Activated naive CD4-positive, alpha-beta T cell treated with anti-CD3 and anti-CD28 coated beads for 36 hours (primary cell): ENCODE measurements at regions of chr6 and their contacts with region 1.

Region 1: DNA sequence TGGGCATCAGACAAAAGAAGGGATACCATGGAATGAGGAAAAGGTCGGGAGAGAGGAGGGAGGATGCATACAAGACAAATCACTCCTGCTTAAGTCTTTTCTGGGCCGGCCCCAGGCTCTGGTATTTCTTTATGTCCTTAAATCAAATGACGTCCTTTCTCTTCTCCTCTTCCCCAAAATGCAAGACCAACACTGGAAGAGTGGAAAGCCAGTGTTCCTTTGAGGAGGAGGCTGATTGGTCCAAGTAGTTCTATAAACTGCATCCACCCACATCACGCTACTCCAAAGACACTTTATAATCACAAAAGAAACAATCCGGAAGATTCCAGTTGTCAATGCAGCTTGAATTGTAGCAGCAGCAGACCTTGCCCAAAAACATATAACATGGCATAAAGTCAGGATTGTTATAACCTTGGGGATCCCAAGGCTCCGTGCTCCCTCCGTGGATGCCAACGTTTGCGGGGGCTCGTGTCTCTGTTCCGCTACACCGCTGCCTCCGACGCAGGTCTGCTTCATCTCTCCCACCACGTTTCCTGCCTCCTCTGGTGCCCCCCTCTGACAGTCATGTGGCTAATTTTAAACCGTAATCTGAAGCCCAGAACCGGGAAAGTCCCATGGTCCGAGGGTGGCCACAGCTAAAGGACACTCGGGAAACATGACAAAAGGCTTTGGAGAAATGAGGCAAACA is 47.1 kb downstream of the MCUR1 start:
- DNase-seq: peak; percentile 71
- H3K4me3 Mint-ChIP-seq: peak overlapping the region; percentile 78
- H3K27ac Mint-ChIP-seq: no peak overlapping the region
- H3K4me1 Mint-ChIP-seq: peaks cover 43% of the 10 kb centered on the region
- H3K27me3 Mint-ChIP-seq: peaks cover 1% of the 10 kb centered on the region

Region 2: GRCh38 chr6:13178107-13178506 is 589.2 kb before region 1 on chr6:
- CTCF ChIA-PET with region 1: no interaction called
- intact Hi-C with region 1: no loop called
- DNase-seq: no peak
- H3K4me3 Mint-ChIP-seq: no peak overlapping the region
- H3K27ac Mint-ChIP-seq: no peak overlapping the region
- H3K4me1 Mint-ChIP-seq: peaks cover 3% of the 10 kb centered on the region
- H3K27me3 Mint-ChIP-seq: peaks cover 7% of the 10 kb centered on the region

Region 3: GRCh38 chr6:13725570-13725969 is 41.7 kb before region 1 on chr6:
- CTCF ChIA-PET with region 1: interaction called, 5 read pairs
- intact Hi-C with region 1: loop called (anchors 1 kb)
- DNase-seq: peak; percentile 62
- H3K4me3 Mint-ChIP-seq: no peak overlapping the region
- H3K27ac Mint-ChIP-seq: peak overlapping the region; percentile 80
- H3K4me1 Mint-ChIP-seq: peaks cover 38% of the 10 kb centered on the region
- H3K27me3 Mint-ChIP-seq: no peaks in the 10 kb centered on the region

Region 4: DNA sequence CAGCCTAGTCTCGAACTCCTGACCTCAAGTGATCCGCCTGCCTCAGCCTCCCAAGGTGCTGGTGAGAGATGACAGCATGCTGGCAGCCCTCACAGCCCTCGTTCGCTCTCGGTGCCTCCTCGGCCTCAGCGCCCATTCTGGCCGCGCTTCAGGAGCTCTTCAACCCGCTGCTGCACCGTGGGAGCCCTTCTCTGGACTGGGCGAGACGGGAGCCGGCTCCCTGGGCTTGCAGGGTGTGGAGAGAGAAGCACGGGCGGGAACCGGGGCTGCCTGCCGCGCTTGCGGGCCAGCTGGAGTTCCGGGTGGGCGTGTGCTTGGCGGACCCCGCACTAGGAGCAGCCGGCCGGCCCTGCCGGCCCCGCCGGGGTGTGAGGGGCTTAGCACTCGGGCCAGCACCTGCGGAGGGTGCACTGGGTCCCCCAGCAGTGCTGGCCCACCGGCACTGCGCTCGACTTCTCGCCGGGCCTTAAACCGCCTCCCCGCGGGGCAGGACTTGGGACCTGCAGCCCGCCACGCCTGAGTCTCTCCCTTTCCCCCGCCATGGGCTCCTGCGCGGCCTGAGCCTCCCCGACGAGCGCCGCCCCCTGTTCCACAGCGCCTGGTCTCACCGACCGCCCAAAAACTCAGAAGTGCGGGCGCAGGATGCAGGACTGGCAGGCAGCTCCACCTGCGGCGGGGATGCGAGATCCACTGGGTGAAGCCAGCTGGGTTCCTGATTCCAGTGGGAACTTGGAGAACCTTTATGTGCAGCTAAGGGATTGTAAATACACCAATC is 24.1 kb before region 1 on chr6:
- CTCF ChIA-PET with region 1: interaction called, 8 read pairs
- intact Hi-C with region 1: loop called (anchors 1 kb)
- DNase-seq: no peak
- H3K4me3 Mint-ChIP-seq: peak overlapping the region; percentile 57
- H3K27ac Mint-ChIP-seq: no peak overlapping the region
- H3K4me1 Mint-ChIP-seq: peaks cover 5% of the 10 kb centered on the region
- H3K27me3 Mint-ChIP-seq: peaks cover 2% of the 10 kb centered on the region